OCI-LY7 (cell line): ENCODE measurements at regions of chr16 and their contacts with region 1.

Region 1: GRCh38 chr16:10876799-10877341 is at the start of gene CIITA:
- DNase-seq: peak; percentile 97
- H3K4me3 ChIP-seq: peak within 1 kb of the TSS; percentile 87
- H3K27ac ChIP-seq: peak within 1 kb of the TSS; percentile 94
- H3K4me1 ChIP-seq: peaks cover 60% of the 10 kb centered on the region
- CTCF ChIP-seq: no peak
- total RNA-seq, gene CIITA: 56.1 and 68.7 TPM in 2 replicates

Region 2: GRCh38 chr16:10743610-10744393 is 133.1 kb before region 1 on chr16 and contains the start of gene NUBP1:
- CTCF ChIA-PET with region 1: interaction called, 3 read pairs
- POLR2A ChIA-PET with region 1: interaction called, 13 read pairs
- intact Hi-C with region 1: loop called (anchors 2 kb)
- DNase-seq: peak; percentile 95
- H3K4me3 ChIP-seq: peak within 1 kb of the TSS; percentile 70
- H3K27ac ChIP-seq: peak within 1 kb of the TSS; percentile 75
- H3K4me1 ChIP-seq: peaks cover 32% of the 10 kb centered on the region
- CTCF ChIP-seq: no peak
- total RNA-seq, gene NUBP1: 15.1 and 27.4 TPM in 2 replicates

Region 3: GRCh38 chr16:10888320-10888937 is 11.6 kb after region 1 on chr16:
- CTCF ChIA-PET with region 1: interaction called, 28 read pairs
- POLR2A ChIA-PET with region 1: interaction called, 53 read pairs
- intact Hi-C with region 1: loop called (anchors 1 kb)
- DNase-seq: peak; percentile 80
- H3K4me3 ChIP-seq: peak overlapping the region; percentile 65
- H3K27ac ChIP-seq: peak overlapping the region; percentile 91
- H3K4me1 ChIP-seq: peaks cover 99% of the 10 kb centered on the region
- CTCF ChIP-seq: no peak; the same call in 1 of the 2 replicates

Region 4: GRCh38 chr16:10906914-10907756 is 30.3 kb after region 1 on chr16:
- CTCF ChIA-PET with region 1: no interaction called
- POLR2A ChIA-PET with region 1: interaction called, 5 read pairs
- intact Hi-C with region 1: loop called (anchors 1 kb)
- DNase-seq: no peak
- H3K4me3 ChIP-seq: no peak overlapping the region
- H3K27ac ChIP-seq: no peak overlapping the region
- H3K4me1 ChIP-seq: peaks cover under 1% of the 10 kb centered on the region
- CTCF ChIP-seq: no peak

Region 5: GRCh38 chr16:10944249-10945064 is 67.6 kb after region 1 on chr16 and contains the start of gene CLEC16A:
- CTCF ChIA-PET with region 1: no interaction called
- POLR2A ChIA-PET with region 1: interaction called, 4 read pairs
- intact Hi-C with region 1: loop called (anchors 5 kb)
- DNase-seq: peak; percentile 97
- H3K4me3 ChIP-seq: peak within 1 kb of the TSS; percentile 85
- H3K27ac ChIP-seq: peak within 1 kb of the TSS; percentile 51
- H3K4me1 ChIP-seq: peaks cover 73% of the 10 kb centered on the region
- CTCF ChIP-seq: no peak
- total RNA-seq, gene CLEC16A: 26.2 and 31.1 TPM in 2 replicates